Astrocyte of the cerebellum (primary cell): ENCODE measurements at regions of chr2 and their contacts with region 1.

Region 1: DNA sequence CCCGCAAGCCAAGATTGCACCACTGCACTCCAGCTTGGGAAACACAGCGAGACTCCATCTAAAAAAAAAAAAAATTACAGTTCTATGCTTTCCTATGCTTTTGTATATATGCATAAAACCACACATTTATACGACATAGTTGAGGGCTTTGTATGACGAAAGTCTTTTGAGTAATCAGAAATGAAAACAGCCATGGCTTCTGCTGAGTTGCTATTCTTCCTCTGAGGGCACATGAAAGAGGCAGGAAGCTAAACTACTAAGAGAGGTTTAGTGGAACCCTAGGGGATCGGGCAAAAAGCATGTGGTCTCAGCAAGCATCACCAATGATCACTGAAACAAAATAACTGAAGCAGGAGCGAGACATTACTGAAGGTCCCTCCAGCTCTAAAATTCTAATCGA is 99.6 kb downstream of the ZAP70 start:
- DNase-seq: peak; percentile 37
- H3K4me3 ChIP-seq: no peak overlapping the region
- CTCF ChIP-seq: no peak

Region 2: DNA sequence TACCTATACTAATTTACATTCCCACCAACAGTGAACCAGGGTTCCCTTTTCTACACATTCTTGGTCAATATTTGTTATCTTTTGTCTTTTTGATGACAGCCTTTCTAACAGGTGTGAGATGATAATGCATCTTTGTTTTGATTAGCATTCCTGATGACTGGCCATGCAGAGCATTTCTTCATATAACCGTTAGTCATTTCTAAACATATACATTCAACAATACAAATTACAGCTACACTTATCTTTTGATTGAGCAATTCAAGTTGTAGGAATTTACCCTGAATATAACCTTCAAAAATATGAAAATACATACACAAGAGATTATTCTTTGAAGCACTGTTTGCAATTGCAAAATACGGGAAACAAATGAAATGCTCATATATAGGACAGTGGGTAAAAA is 87.9 kb after region 1 on chr2:
- in situ Hi-C with region 1: no loop called
- DNase-seq: no peak
- H3K4me3 ChIP-seq: no peak overlapping the region
- CTCF ChIP-seq: no peak

Region 3: DNA sequence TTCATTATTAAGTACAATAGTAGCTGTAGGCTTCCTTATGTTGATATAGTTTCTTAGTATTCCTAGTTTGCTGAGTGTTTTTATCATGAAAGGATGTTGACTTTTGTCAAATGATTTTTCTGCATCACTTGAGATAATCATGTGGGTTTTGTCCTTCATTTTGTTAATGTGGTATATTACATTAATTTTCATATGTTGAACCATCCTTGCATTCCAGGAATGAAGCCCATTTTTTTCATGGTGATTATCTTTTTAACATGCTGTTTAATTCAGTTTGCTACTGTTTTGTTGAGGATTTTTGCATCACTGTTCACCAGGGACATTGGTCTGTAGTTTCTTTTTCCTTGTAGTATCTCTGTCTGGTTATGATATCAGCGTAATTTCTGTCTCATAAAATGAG is 450.4 kb after region 1 on chr2:
- in situ Hi-C with region 1: loop called (anchors 5 kb)
- DNase-seq: no peak
- H3K4me3 ChIP-seq: no peak overlapping the region
- CTCF ChIP-seq: no peak